OCI-LY7 (cell line): ENCODE measurements at regions of chr6 and their contacts with region 1.

Region 1: DNA sequence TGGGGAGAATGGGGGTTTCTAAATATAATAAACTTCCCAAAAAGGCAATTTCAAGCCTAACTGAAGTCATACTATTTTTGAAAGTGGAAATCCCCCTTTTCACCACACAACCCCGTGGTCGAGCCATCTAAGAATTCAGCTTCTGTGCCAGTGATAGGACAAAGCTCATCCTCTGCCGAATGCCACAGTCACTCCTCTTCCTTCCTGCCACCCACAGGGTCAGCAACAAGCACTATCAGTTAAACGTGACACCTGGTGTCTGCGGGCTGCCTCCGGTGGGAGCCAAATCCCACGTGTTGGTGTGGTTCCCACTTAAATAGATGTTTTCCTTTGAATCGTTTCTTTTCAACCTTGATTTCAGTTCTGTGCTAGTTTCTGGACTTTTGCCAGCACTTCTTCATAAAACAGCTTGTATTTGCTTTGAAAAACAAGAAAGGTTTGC is 60.7 kb downstream of the TNFAIP3 start:
- DNase-seq: peak; percentile 61
- H3K4me3 ChIP-seq: peak overlapping the region; percentile 9
- H3K27ac ChIP-seq: peak overlapping the region; percentile 22
- H3K4me1 ChIP-seq: peaks cover 27% of the 10 kb centered on the region
- CTCF ChIP-seq: 0 out of 2 replicates have a peak, but pooled peaks have one; percentile 31

Region 2: DNA sequence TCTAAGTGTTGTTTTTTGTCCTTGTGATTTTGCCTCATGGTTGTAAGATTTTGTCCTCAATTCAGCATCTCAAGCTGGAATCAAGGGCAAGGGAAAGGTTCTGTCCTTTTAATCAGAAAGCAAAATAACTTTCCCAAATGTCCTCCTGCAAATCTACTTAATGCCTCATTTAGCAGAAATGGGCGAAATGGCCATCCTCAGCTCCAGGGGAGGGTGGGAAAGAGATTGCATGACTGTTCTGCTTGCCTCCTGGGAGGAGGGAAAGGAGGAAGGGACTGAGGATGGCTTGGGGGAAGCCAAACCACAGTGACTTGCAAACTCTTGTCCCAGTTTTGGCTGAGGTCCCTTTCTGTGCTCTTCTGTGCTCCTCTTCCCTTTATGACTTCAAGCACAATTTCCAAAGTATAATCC is 17.4 kb before region 1 on chr6:
- CTCF ChIA-PET with region 1: no interaction called
- POLR2A ChIA-PET with region 1: interaction called, 16 read pairs
- intact Hi-C with region 1: no loop called
- DNase-seq: no peak
- H3K4me3 ChIP-seq: no peak overlapping the region
- H3K27ac ChIP-seq: no peak overlapping the region
- H3K4me1 ChIP-seq: peaks cover 2% of the 10 kb centered on the region
- CTCF ChIP-seq: no peak

Region 3: DNA sequence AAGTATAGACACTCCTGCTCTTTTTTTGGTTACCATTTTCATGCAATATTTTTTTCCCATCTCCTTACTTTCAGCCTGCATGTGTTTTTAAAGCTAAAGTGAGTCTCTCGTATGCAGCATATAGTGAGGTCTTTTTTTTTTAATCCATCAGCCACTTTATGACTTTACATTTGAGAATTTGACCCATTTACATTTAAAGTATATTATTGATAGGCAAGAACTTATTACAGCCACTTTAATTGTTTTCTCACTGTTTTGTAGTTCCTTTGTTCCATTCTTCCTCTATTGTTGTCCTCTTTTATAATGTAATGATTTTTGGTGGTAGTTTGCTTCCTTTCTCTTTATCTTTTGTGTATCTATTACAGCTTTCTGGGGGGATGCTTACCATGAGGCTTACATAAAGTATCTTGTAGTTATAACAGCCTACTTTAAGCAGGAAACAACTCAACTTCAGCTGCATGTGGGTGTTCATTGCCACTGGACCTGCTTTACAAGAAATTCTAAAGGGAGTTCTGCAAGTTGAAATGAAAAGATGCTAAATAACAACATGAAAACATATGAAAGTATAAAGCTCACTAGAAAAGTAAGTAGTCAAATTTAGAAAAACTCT is 11.1 kb after region 1 on chr6:
- CTCF ChIA-PET with region 1: no interaction called
- POLR2A ChIA-PET with region 1: interaction called, 11 read pairs
- intact Hi-C with region 1: no loop called
- DNase-seq: no peak
- H3K4me3 ChIP-seq: no peak overlapping the region
- H3K27ac ChIP-seq: no peak overlapping the region
- H3K4me1 ChIP-seq: peaks cover 7% of the 10 kb centered on the region
- CTCF ChIP-seq: no peak